WTC11 (cell line): ENCODE measurements at regions of chr7 and their contacts with region 1.

Region 1: DNA sequence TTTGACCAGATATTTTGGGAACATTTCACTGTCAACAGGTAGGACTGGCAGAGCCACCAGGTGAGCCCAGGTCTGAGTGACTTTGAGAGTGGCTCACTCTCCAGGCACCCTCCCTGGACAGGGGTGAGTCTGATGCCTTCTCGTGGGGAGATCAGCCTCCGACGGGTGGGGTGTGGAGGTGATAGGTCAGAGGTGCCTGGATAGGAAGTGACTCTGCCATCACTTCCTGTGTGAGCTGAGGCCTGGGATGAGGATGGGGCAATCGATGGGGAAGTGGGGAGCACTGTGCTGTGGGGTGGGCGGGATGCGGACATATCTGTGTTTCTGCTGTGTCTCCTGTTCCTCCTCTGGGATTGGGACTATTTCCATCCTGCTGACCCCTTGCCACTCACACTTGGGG is 34.6 kb downstream of the IFT22 start:
- DNase-seq: no peak
- ATAC-seq: no peak
- H3K4me3 Mint-ChIP-seq: no peak overlapping the region
- H3K27ac Mint-ChIP-seq: peak overlapping the region; percentile 68
- H3K4me1 Mint-ChIP-seq: peaks cover 43% of the 10 kb centered on the region
- H3K27me3 Mint-ChIP-seq: no peaks in the 10 kb centered on the region; the same call in 1 of the 2 replicates
- CTCF ChIP-seq: no peak

Region 2: GRCh38 chr7:100874577-100875355 is 412.3 kb before region 1 on chr7 and contains the start of gene SRRT:
- CTCF ChIA-PET with region 1: no interaction called
- POLR2A ChIA-PET with region 1: no interaction called
- DNase-seq: peak; percentile 98
- ATAC-seq: peak; percentile 94
- H3K4me3 Mint-ChIP-seq: peak within 1 kb of the TSS; percentile 98
- H3K27ac Mint-ChIP-seq: peak within 1 kb of the TSS; percentile 99
- H3K4me1 Mint-ChIP-seq: peaks cover 19% of the 10 kb centered on the region
- H3K27me3 Mint-ChIP-seq: no peaks in the 10 kb centered on the region
- CTCF ChIP-seq: no peak
- total RNA-seq, gene SRRT: 209 to 238 TPM (median 233 TPM) in 3 replicates

Region 3: DNA sequence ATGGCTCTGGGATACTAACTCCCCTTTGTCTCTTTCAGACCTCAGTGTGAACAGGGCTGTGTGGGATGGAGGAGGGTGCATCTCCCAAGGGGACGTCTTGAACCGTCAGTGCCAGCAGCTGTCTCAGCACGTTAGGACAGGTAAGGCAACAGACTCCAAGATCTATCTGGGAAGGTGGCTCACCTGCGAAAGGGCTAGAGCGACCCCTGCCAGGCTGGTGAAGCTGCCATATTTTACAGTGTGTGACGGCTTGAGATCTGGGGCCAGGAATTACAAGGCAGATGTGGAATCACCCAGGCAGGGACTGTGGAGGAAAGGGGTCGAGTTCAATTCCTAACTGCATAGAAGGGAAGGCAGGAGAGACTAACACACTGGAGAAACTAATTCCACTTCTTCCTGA is 255.9 kb before region 1 on chr7:
- CTCF ChIA-PET with region 1: no interaction called
- POLR2A ChIA-PET with region 1: no interaction called
- DNase-seq: peak; percentile 63
- ATAC-seq: peak; percentile 95
- H3K4me3 Mint-ChIP-seq: no peak overlapping the region
- H3K27ac Mint-ChIP-seq: no peak overlapping the region
- H3K4me1 Mint-ChIP-seq: no peaks in the 10 kb centered on the region
- H3K27me3 Mint-ChIP-seq: peaks cover 3% of the 10 kb centered on the region; the same call in 1 of the 2 replicates
- CTCF ChIP-seq: no peak

Region 4: DNA sequence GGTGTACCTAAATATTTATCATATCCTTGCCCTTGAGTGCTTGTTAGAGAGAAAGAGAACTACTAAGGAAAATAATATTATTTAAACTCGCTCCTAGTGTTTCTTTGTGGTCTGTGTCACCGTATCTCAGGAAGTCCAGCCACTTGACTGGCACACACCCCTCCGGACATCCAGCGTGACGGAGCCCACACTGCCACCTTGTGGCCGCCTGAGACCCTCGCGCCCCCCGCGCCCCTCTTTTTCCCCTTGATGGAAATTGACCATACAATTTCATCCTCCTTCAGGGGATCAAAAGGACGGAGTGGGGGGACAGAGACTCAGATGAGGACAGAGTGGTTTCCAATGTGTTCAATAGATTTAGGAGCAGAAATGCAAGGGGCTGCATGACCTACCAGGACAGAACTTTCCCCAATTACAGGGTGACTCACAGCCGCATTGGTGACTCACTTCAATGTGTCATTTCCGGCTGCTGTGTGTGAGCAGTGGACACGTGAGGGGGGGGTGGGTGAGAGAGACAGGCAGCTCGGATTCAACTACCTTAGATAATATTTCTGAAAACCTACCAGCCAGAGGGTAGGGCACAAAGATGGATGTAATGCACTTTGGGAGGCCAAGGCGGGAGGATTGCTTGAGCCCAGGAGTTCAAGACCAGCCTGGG is 148.7 kb before region 1 on chr7:
- CTCF ChIA-PET with region 1: interaction called, 76 read pairs
- POLR2A ChIA-PET with region 1: no interaction called
- DNase-seq: peak; percentile 62
- ATAC-seq: peak; percentile 73
- H3K4me3 Mint-ChIP-seq: peak overlapping the region; percentile 46
- H3K27ac Mint-ChIP-seq: no peak overlapping the region
- H3K4me1 Mint-ChIP-seq: peaks cover 52% of the 10 kb centered on the region
- H3K27me3 Mint-ChIP-seq: peaks cover 3% of the 10 kb centered on the region; the same call in 1 of the 2 replicates
- CTCF ChIP-seq: peak; percentile 59

Region 5: DNA sequence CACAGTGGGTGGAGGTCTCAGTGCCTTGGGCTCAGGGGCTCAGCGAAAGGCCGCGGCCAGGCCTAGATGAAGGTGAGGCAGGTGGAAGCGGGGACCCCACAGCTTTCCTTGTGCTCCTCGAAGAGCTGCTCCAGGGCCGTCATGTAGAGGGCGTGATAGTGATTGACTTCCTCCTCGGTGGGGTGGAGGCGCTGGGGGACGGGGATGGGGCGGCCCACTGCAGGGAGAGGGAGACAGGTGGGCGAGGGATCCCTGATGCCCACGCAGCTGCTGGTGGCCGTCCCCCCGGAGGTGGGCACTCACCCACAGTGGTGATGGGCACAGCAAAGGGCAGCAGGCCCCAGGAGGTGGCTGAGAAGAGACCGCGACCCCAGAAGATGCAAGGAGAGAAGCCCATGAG is 91.1 kb before region 1 on chr7:
- CTCF ChIA-PET with region 1: interaction called, 47 read pairs
- POLR2A ChIA-PET with region 1: no interaction called
- DNase-seq: no peak
- ATAC-seq: no peak
- H3K4me3 Mint-ChIP-seq: no peak overlapping the region
- H3K27ac Mint-ChIP-seq: no peak overlapping the region
- H3K4me1 Mint-ChIP-seq: peaks cover 13% of the 10 kb centered on the region
- H3K27me3 Mint-ChIP-seq: no peaks in the 10 kb centered on the region; the same call in 1 of the 2 replicates
- CTCF ChIP-seq: no peak

Region 6: DNA sequence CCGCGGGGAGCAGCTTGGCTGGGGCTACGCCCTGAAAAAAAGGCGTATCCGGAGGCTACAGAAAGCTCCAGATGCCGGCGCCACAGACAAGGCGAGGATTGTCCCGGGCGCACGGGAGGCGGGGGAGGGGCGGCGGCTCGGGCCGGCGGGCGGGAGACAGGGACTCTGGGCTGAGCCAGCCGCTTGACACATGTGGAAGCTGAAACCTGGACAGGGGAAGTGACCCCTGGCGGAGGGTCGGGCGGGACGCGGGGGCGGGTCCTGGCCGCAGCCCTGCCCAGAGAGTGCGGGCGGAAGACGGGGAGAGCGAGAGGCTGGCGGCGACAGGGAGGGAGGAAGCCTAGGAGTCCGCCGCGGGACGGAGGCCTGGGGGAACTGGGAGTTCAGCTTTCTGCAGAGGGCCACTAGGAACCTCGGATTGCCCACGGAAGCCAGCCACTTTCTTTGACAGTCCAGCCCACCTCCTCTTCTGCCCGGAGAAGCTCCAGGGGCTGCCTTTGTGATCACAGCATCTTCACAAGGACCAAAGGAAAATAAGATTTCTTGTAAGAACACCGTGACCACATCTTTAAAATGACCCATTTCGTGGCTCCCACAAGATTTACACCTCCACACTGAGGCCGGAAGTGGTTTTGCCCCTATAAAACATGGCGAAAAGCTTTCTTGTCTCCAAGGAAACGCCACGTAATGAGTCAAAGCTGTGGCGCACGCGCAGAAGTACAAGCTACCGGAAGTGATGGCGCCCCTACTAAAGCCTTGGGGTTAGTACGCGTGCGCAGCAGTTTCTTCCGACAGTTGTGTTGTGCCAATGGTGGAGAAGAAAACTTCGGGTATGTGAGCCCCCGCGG is 69.4 kb before region 1 on chr7 and contains the starts of genes PLOD3 and ZNHIT1:
- CTCF ChIA-PET with region 1: interaction called, 41 read pairs
- POLR2A ChIA-PET with region 1: interaction called, 6 read pairs
- DNase-seq: peak; percentile 96
- ATAC-seq: peak; percentile 84
- H3K4me3 Mint-ChIP-seq: peak within 1 kb of the TSS; percentile 98
- H3K27ac Mint-ChIP-seq: peak within 1 kb of the TSS; percentile 90
- H3K4me1 Mint-ChIP-seq: peaks cover 27% of the 10 kb centered on the region
- H3K27me3 Mint-ChIP-seq: no peaks in the 10 kb centered on the region
- CTCF ChIP-seq: no peak
- total RNA-seq, gene PLOD3: 45.3 to 48.3 TPM (median 48.1 TPM) in 3 replicates
- total RNA-seq, gene ZNHIT1: 61.9 to 63.9 TPM (median 62.8 TPM) in 3 replicates

Region 7: DNA sequence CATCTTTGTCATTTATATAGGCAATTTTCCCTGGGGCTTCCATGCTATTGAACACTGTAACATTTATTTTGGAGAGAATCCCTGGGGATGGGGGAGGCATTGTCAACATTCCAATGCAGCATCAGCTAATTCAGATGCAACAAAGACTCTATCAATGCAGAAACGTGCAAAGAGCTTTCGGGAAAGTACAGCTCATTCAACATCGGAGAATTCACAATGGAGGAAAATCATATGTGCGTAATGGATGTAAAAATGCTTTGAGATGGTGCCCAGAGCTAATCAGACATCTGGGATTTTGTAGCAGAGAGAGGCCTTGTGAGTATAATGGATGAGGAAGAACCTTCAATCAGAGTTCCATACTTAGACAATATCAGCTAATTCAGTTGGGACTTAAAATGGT is 13.8 kb before region 1 on chr7:
- CTCF ChIA-PET with region 1: interaction called, 21 read pairs
- POLR2A ChIA-PET with region 1: interaction called, 3 read pairs
- DNase-seq: no peak
- ATAC-seq: no peak; the same call in 1 of the 2 replicates
- H3K4me3 Mint-ChIP-seq: no peak overlapping the region; the same call in 1 of the 2 replicates
- H3K27ac Mint-ChIP-seq: peak overlapping the region; percentile 58
- H3K4me1 Mint-ChIP-seq: peaks cover 13% of the 10 kb centered on the region
- H3K27me3 Mint-ChIP-seq: no peaks in the 10 kb centered on the region
- CTCF ChIP-seq: no peak

Region 8: DNA sequence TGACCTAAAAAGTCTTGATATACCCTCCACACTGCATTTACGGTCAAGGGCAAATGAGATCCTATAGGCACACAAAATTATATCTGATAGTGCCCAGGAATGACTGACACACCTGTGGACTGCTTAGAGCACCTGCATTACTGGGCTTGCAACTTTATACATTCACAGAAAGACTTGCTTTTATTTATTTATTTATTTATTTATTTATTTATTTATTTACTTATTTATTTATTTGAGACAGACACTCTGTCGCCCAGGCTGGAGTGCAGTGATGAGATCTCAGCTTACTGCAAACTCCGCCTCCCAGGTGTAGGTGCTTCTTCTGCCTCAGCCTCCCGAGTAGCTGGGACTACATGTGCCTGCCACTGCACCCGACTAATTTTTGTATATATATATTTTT is 41.1 kb after region 1 on chr7:
- CTCF ChIA-PET with region 1: no interaction called
- POLR2A ChIA-PET with region 1: no interaction called
- DNase-seq: no peak
- ATAC-seq: no peak
- H3K4me3 Mint-ChIP-seq: no peak overlapping the region
- H3K27ac Mint-ChIP-seq: no peak overlapping the region
- H3K4me1 Mint-ChIP-seq: no peaks in the 10 kb centered on the region
- H3K27me3 Mint-ChIP-seq: no peaks in the 10 kb centered on the region
- CTCF ChIP-seq: no peak